ENCODE measurements at regions of chr2 and their contacts with region 1.

Region 1: GRCh38 chr2:40814616-40815015 is 362.7 kb upstream of the SLC8A1 start:
- DNase-seq: no peak
- H3K4me3 ChIP-seq: no peak overlapping the region
- H3K27ac ChIP-seq: no peak overlapping the region
- H3K4me1 ChIP-seq: no peaks in the 10 kb centered on the region
- H3K27me3 ChIP-seq: no peaks in the 10 kb centered on the region
- CTCF ChIP-seq: no peak

Region 2: DNA sequence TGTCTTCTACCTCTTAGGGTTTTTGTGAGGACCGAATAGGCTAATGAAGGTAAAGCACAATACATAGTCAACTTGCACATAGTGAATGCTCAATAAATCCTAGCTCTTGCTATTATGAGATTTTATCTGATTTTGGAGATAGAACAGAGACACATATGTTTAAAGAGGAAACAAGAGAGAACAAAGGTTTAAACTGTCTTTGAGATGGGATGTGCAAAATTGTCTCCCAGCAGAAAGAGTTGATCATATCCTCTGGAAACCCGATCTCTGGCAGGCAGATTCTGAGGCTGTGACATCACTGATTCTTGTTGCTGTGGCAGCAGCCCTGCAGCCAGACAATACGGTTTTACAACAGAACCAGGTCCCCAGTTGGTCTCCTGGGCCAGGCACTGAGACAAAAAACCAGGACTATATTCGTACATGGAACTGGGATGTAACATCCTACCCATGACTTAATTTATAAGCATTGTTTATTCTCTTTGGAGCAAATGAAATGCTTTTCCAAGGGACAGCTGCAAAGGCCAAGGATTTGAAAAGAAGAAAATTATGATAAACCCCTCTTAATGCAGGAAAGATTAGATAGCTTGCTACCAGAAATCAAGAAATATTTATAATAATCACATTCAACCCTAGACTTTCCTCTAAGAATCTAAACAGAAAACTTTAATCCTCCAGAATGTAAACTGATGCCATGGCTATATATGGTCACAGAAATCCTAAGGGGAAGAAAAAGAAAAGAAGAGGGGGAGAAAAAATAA is 442.9 kb before region 1 on chr2:
- CTCF ChIA-PET with region 1: no interaction called
- POLR2A ChIA-PET with region 1: no interaction called
- intact Hi-C with region 1: no loop called
- DNase-seq: no peak
- H3K4me3 ChIP-seq: no peak overlapping the region
- H3K27ac ChIP-seq: no peak overlapping the region
- H3K4me1 ChIP-seq: no peaks in the 10 kb centered on the region
- H3K27me3 ChIP-seq: peaks cover 55% of the 10 kb centered on the region
- CTCF ChIP-seq: no peak

Region 3: DNA sequence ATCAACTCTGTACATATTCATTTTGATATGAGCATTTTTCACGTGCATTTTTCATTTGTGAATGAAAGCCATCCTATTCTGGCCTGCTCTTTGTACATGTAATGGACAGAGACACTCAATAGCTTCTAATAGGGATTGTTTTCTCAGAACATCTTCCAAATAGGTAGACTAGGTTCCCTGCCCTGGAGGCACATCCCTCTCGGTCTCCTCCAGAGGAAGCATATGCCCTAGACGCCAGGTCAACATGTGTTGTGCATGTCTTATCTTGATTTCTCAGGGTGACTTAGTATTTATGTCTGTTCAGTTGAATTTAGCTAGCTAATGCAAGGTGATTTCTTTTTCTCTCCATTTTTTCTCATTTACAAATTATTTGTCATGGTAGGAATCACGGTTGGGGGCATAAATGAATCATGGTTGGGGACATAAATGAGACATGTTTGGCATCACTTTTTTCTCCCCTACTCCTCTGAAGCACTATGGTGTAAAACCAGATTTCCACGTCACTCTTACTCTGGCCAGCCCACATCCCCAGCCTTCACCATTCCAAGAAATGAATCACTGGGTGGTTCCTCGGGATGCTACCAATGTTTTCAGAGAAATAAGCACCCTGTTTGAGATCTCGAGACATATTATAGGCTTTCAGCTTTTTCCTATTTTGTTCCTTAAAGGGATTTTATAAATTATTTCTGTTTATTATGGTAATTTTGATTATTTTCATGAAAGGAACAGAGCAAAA is 207.9 kb before region 1 on chr2:
- CTCF ChIA-PET with region 1: no interaction called
- POLR2A ChIA-PET with region 1: no interaction called
- intact Hi-C with region 1: no loop called
- DNase-seq: no peak
- H3K4me3 ChIP-seq: no peak overlapping the region
- H3K27ac ChIP-seq: no peak overlapping the region
- H3K4me1 ChIP-seq: no peaks in the 10 kb centered on the region
- H3K27me3 ChIP-seq: peaks cover 3% of the 10 kb centered on the region
- CTCF ChIP-seq: no peak

Region 4: GRCh38 chr2:40877734-40878288 is 63.2 kb after region 1 on chr2:
- CTCF ChIA-PET with region 1: no interaction called
- POLR2A ChIA-PET with region 1: no interaction called
- intact Hi-C with region 1: loop called (anchors 2 kb)
- DNase-seq: no peak
- H3K4me3 ChIP-seq: no peak overlapping the region
- H3K27ac ChIP-seq: no peak overlapping the region
- H3K4me1 ChIP-seq: no peaks in the 10 kb centered on the region
- H3K27me3 ChIP-seq: no peaks in the 10 kb centered on the region
- CTCF ChIP-seq: no peak

Region 5: GRCh38 chr2:41241325-41242000 is 426.8 kb after region 1 on chr2:
- CTCF ChIA-PET with region 1: no interaction called
- POLR2A ChIA-PET with region 1: no interaction called
- intact Hi-C with region 1: no loop called
- DNase-seq: no peak
- H3K4me3 ChIP-seq: no peak overlapping the region
- H3K27ac ChIP-seq: no peak overlapping the region
- H3K4me1 ChIP-seq: no peaks in the 10 kb centered on the region
- H3K27me3 ChIP-seq: no peaks in the 10 kb centered on the region
- CTCF ChIP-seq: no peak

Measured in A673 (cell line).